HCT116 (cell line): ENCODE measurements at regions of chr19 and their contacts with region 1.

Region 1: GRCh38 chr19:44304659-44305193 is at the start of gene ZNF235:
- DNase-seq: peak; percentile 89
- ATAC-seq: peak; percentile 99
- H3K4me3 ChIP-seq: peak within 1 kb of the TSS; percentile 76 to 86
- H3K27ac ChIP-seq: peak within 1 kb of the TSS; percentile 60
- H3K4me1 ChIP-seq: peaks cover 3 to 14% of the 10 kb centered on the region in 2 experiments; a peak in 3 of 4 replicates
- H3K27me3 ChIP-seq: no peaks in the 10 kb centered on the region
- CTCF ChIP-seq: no peak
- POLR2A ChIP-seq: no peak
- RAD21 ChIP-seq: no peak; the same call in 1 of the 2 replicates
- total RNA-seq, gene ZNF235: 5.7 TPM

Region 2: DNA sequence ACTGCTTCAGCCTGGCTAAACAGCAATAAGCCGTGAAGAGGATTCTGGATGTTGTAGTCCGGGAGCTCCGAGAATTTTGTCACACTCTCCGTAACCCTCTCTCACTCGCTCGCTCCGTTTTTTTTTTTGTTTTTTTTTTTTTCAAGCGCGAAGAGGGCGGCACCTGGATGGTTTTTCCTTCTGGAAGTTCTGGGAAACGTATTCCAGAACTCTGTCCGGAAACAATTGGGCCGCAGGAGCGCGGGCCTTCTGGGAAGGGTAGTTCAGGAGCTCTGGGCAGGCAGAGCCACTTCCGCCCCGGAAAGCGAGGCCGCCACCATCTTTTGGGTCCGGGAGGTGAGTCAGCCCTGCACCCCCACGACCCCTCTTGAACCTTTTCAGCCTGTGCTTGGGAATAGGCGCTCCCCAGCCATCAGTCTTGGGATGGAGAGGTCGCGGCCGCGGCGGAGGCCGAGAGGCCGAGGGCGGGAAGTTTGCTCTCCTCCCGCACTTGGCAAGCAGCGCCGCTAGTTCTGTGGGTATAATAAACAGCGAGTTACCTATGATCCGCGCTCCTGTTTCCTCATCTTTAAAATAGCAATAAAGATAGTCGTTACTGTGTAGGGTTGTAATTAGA is 92.4 kb before region 1 on chr19 and contains the start of gene ZNF227:
- CTCF ChIA-PET with region 1: no interaction called
- POLR2A ChIA-PET with region 1: no interaction called
- RAD21 ChIA-PET with region 1: no interaction called
- intact Hi-C with region 1: loop called (anchors 5 kb)
- DNase-seq: peak; percentile 86
- ATAC-seq: peak; percentile 96
- H3K4me3 ChIP-seq: peak within 1 kb of the TSS; percentile 85
- H3K27ac ChIP-seq: peak within 1 kb of the TSS; percentile 47
- H3K4me1 ChIP-seq: peaks cover 4 to 5% of the 10 kb centered on the region in 2 experiments; a peak in 1 of 4 replicates
- H3K27me3 ChIP-seq: no peaks in the 10 kb centered on the region
- CTCF ChIP-seq: no peak
- POLR2A ChIP-seq: no peak
- RAD21 ChIP-seq: no peak
- total RNA-seq, gene ZNF227: 14.4 TPM

Region 3: GRCh38 chr19:44356383-44357111 is 51.8 kb after region 1 on chr19 and contains the start of gene ZNF112:
- CTCF ChIA-PET with region 1: no interaction called
- POLR2A ChIA-PET with region 1: no interaction called
- RAD21 ChIA-PET with region 1: no interaction called
- intact Hi-C with region 1: loop called (anchors 1 kb)
- DNase-seq: peak; percentile 90
- ATAC-seq: peak; percentile 100
- H3K4me3 ChIP-seq: peak within 1 kb of the TSS; percentile 70 to 80
- H3K27ac ChIP-seq: no peak within 1 kb of the TSS
- H3K4me1 ChIP-seq: peaks cover 0 to 3% of the 10 kb centered on the region in 2 experiments; a peak in 2 of 4 replicates
- H3K27me3 ChIP-seq: no peaks in the 10 kb centered on the region
- CTCF ChIP-seq: no peak
- POLR2A ChIP-seq: peak; percentile 46
- RAD21 ChIP-seq: no peak
- total RNA-seq, gene ZNF112: 3.6 TPM